Endothelial cell of umbilical vein (primary cell): ENCODE measurements at regions of chr19 and their contacts with region 1.

Region 1: DNA sequence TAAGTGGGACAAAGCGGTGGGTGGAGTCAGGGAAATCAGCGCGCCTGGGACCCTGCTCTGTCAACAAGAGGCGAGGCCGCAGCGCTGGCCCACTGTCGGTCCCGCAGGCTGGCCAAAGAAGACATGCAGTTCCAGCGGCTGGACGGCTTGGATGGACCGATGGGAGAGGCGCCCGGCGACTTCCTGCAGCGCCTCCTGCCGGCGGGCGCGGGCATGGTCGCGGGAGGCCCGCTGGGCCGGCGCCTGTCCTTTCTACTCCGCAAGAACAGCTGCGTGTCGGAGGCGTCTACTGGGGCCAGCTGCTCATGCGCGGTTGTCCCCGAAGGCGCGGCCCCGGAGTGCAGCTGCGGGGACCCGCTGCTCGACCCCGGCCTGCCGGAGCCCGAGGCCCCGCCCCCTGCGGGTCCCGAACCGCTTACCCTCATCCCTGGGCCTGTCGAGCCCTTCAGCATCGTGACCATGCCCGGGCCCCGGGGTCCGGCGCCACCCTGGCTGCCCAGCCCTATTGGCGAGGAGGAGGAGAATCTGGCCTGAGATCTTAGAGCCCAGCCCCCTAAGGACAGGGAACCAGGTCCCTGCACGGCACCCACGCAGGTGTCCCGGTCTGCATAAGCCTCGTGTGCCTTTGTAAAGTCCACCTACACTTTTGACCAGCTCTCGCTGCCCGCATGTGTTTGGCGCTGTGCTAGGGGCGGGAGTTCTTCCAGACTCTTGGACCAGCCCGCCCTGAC is 6.1 kb downstream of the BEST2 start:
- DNase-seq: peak; percentile 81
- H3K4me3 ChIP-seq: peak overlapping the region in 2 of 3 experiments; percentile 22 to 39
- H3K27ac ChIP-seq: no peak overlapping the region
- H3K4me1 ChIP-seq: no peaks in the 10 kb centered on the region
- H3K27me3 ChIP-seq: no peaks in the 10 kb centered on the region
- CTCF ChIP-seq: peak; percentile 98 to 99
- POLR2A ChIP-seq: no peak

Region 2: GRCh38 chr19:12564016-12564664 is 193.6 kb before region 1 on chr19:
- CTCF ChIA-PET with region 1: no interaction called
- POLR2A ChIA-PET with region 1: no interaction called
- dilution Hi-C with region 1: no loop called
- intact Hi-C with region 1: loop called (anchors 1 kb)
- DNase-seq: peak; percentile 85
- H3K4me3 ChIP-seq: no peak overlapping the region
- H3K27ac ChIP-seq: no peak overlapping the region
- H3K4me1 ChIP-seq: no peaks in the 10 kb centered on the region
- H3K27me3 ChIP-seq: no peaks in the 10 kb centered on the region
- CTCF ChIP-seq: peak; percentile 91 to 98
- POLR2A ChIP-seq: no peak

Region 3: GRCh38 chr19:12628040-12629022 is 129.4 kb before region 1 on chr19:
- CTCF ChIA-PET with region 1: no interaction called
- POLR2A ChIA-PET with region 1: no interaction called
- dilution Hi-C with region 1: no loop called
- intact Hi-C with region 1: no loop called
- DNase-seq: no peak
- H3K4me3 ChIP-seq: no peak overlapping the region
- H3K27ac ChIP-seq: no peak overlapping the region
- H3K4me1 ChIP-seq: no peaks in the 10 kb centered on the region
- H3K27me3 ChIP-seq: no peaks in the 10 kb centered on the region
- CTCF ChIP-seq: no peak
- POLR2A ChIP-seq: no peak

Region 4: GRCh38 chr19:12701596-12702282 is 56.0 kb before region 1 on chr19:
- CTCF ChIA-PET with region 1: no interaction called
- POLR2A ChIA-PET with region 1: no interaction called
- dilution Hi-C with region 1: no loop called
- intact Hi-C with region 1: no loop called
- DNase-seq: no peak
- H3K4me3 ChIP-seq: no peak overlapping the region
- H3K27ac ChIP-seq: no peak overlapping the region
- H3K4me1 ChIP-seq: peaks cover 2% of the 10 kb centered on the region
- H3K27me3 ChIP-seq: no peaks in the 10 kb centered on the region
- CTCF ChIP-seq: no peak
- POLR2A ChIP-seq: no peak

Region 5: DNA sequence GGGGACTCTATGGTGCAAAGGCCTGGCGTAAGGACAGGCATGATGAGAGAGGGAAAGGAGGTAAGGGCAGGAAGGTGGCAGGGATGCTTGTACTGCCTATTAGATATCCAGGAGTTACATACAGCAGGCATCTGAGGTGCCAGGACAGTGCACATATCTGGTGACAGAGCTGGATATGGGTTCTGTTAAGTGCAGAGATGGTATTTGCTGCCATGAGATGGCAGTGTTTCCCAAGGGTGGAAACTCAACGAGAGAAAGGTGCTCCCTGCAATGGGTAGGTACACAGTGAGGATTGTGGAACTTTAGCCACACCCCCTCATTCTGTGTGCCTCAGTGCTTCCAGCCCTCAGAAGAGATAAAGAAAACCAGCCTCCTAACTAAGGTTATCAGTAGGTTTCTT is 40.8 kb before region 1 on chr19:
- CTCF ChIA-PET with region 1: interaction called, 38 read pairs
- POLR2A ChIA-PET with region 1: no interaction called
- dilution Hi-C with region 1: no loop called
- intact Hi-C with region 1: loop called (anchors 2 kb)
- DNase-seq: peak; percentile 48
- H3K4me3 ChIP-seq: no peak overlapping the region
- H3K27ac ChIP-seq: no peak overlapping the region
- H3K4me1 ChIP-seq: peaks cover 6% of the 10 kb centered on the region
- H3K27me3 ChIP-seq: no peaks in the 10 kb centered on the region
- CTCF ChIP-seq: peak; percentile 21 to 51
- POLR2A ChIP-seq: no peak

Region 6: DNA sequence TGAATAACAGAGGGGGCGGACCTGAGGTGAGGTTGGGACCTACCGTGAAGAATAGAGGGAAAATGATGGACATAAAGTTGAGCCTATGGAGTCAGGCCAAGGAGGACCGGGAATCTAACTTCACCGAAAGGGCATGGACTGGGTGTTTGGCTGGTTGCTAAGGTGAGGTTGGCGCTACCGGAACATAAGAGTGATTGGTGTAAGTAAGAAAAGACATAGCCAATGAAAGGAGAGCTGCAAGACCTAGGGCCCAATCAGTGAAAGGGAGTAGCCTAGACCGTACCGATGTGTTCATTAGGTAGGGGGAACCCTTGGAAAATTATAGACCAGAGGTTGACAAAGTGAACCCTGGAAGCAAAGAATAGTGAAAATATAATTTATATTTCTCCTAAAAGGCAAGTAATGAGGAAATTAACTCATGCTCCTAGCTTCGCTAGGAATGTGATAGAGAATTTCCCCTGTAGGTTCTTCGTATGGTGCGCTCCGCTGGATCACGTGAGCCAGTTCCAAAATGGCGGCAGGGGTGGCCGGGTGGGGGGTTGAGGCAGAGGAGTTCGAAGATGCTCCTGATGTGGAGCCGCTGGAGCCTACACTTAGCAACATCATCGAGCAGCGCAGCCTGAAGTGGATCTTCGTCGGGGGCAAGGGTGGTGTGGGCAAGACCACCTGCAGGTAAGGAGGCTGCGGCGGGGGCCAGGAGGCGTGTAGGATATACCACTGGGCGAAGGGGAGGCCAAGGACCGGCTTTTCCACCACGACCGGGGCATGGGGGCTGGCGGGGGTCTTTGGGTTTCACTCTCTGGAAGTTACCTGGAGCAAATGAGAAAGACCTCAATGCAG is 20.5 kb before region 1 on chr19 and contains the start of gene GET3:
- CTCF ChIA-PET with region 1: interaction called, 10 read pairs
- POLR2A ChIA-PET with region 1: no interaction called
- dilution Hi-C with region 1: no loop called
- intact Hi-C with region 1: no loop called
- DNase-seq: peak; percentile 100
- H3K4me3 ChIP-seq: peak within 1 kb of the TSS; percentile 64 to 99 (median 69)
- H3K27ac ChIP-seq: peak within 1 kb of the TSS; percentile 87
- H3K4me1 ChIP-seq: peaks cover 22% of the 10 kb centered on the region
- H3K27me3 ChIP-seq: no peaks in the 10 kb centered on the region
- CTCF ChIP-seq: no peak
- POLR2A ChIP-seq: peak; percentile 89
- total RNA-seq, gene GET3: 74.8 and 77.0 TPM in 2 replicates

Region 7: GRCh38 chr19:12796146-12797071 is 38.7 kb after region 1 on chr19:
- CTCF ChIA-PET with region 1: interaction called, 524 read pairs
- POLR2A ChIA-PET with region 1: interaction called, 5 read pairs
- dilution Hi-C with region 1: no loop called
- intact Hi-C with region 1: loop called (anchors 1 kb)
- DNase-seq: peak; percentile 80
- H3K4me3 ChIP-seq: no peak overlapping the region
- H3K27ac ChIP-seq: no peak overlapping the region
- H3K4me1 ChIP-seq: peaks cover 18% of the 10 kb centered on the region
- H3K27me3 ChIP-seq: no peaks in the 10 kb centered on the region
- CTCF ChIP-seq: peak; percentile 89 to 90
- POLR2A ChIP-seq: no peak

Region 8: DNA sequence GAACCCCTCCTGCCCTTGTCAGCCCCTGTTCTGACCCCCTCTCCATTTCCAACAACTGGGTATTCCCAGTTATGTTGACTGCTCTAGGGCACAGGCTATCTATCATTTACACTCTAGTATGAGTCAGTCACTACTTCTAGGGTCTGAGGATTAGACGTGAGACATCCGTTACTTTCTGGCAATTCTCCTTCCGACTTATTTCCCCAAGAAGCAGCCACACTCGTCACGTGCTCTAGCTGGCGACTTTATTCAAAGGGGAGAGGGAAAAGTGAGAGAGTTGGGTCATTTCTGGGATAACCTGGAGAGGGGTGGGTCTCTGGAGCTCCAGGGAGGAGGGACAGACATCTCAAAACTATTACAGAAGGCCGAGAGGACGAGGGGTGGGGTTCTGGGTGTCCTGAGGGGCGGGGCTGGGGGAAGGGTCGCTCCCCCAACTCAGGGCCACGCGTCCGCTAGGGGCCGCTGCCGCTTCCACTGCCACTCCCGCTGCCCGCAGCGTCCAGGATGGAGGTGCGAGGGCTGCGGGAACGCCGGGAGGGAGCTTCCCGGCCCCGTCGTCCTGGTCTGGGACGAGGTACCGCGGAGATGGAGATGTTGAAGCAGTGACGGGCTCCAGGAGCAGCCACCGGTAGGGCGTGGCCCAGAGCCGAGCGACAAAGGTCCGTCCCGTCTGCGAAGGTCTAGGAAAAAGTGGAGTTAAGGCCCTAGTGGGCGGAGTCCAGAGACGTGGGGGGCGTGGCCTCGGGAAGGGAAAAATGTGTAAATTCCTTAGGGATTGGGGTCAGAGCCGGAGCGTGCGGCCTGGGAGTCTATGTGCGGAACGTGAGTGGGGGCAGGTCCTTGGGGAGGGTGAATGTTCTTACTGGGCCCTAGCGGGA is 67.8 kb after region 1 on chr19:
- CTCF ChIA-PET with region 1: interaction called, 11 read pairs
- POLR2A ChIA-PET with region 1: no interaction called
- dilution Hi-C with region 1: no loop called
- intact Hi-C with region 1: no loop called
- DNase-seq: peak; percentile 43
- H3K4me3 ChIP-seq: no peak overlapping the region
- H3K27ac ChIP-seq: no peak overlapping the region
- H3K4me1 ChIP-seq: no peaks in the 10 kb centered on the region
- H3K27me3 ChIP-seq: no peaks in the 10 kb centered on the region
- CTCF ChIP-seq: peak; percentile 39 to 66
- POLR2A ChIP-seq: no peak

Region 9: GRCh38 chr19:12974301-12975220 is 216.9 kb after region 1 on chr19:
- CTCF ChIA-PET with region 1: no interaction called
- POLR2A ChIA-PET with region 1: no interaction called
- dilution Hi-C with region 1: no loop called
- intact Hi-C with region 1: no loop called
- DNase-seq: no peak
- H3K4me3 ChIP-seq: no peak overlapping the region
- H3K27ac ChIP-seq: no peak overlapping the region
- H3K4me1 ChIP-seq: no peaks in the 10 kb centered on the region
- H3K27me3 ChIP-seq: no peaks in the 10 kb centered on the region
- CTCF ChIP-seq: no peak
- POLR2A ChIP-seq: no peak

Region 10: GRCh38 chr19:13012690-13013608 is 255.2 kb after region 1 on chr19:
- CTCF ChIA-PET with region 1: no interaction called
- POLR2A ChIA-PET with region 1: no interaction called
- dilution Hi-C with region 1: no loop called
- intact Hi-C with region 1: no loop called
- DNase-seq: peak; percentile 11
- H3K4me3 ChIP-seq: peak overlapping the region in 1 of 3 experiments; percentile 1
- H3K27ac ChIP-seq: no peak overlapping the region
- H3K4me1 ChIP-seq: no peaks in the 10 kb centered on the region
- H3K27me3 ChIP-seq: peaks cover 0 to 12% of the 10 kb centered on the region in 2 experiments
- CTCF ChIP-seq: no peak
- POLR2A ChIP-seq: no peak